CD4-positive, alpha-beta memory T cell (primary cell): ENCODE measurements at regions of chr18 and their contacts with region 1.

Region 1: GRCh38 chr18:3062798-3063680 is 50.1 kb upstream of the LPIN2 start:
- DNase-seq: peak; percentile 63 to 78 (median 66)
- H3K4me3 ChIP-seq: peak overlapping the region in 1 of 2 donors; percentile 53
- H3K4me3 Mint-ChIP-seq: peak overlapping the region; percentile 70 to 86 (median 81)
- H3K27ac ChIP-seq: peak overlapping the region; percentile 93
- H3K27ac Mint-ChIP-seq: peak overlapping the region; percentile 91 to 100 (median 98)
- H3K4me1 ChIP-seq: peaks cover 67% of the 10 kb centered on the region
- H3K4me1 Mint-ChIP-seq: peaks cover 52 to 72% (median 64%) of the 10 kb centered on the region in 4 donors
- H3K27me3 ChIP-seq: no peaks in the 10 kb centered on the region
- H3K27me3 Mint-ChIP-seq: no peaks in the 10 kb centered on the region

Region 2: GRCh38 chr18:2958819-2959298 is 104.2 kb before region 1 on chr18:
- CTCF ChIA-PET with region 1: interaction called, 4 read pairs
- POLR2A ChIA-PET with region 1: interaction called, 89 read pairs
- intact Hi-C with region 1: no loop called
- DNase-seq: peak in 2 of 5 donors; percentile 37 to 64
- H3K4me3 ChIP-seq: peak overlapping the region in 1 of 2 donors; percentile 9
- H3K4me3 Mint-ChIP-seq: peak overlapping the region; percentile 4 to 89 (median 73)
- H3K27ac ChIP-seq: peak overlapping the region; percentile 79
- H3K27ac Mint-ChIP-seq: peak overlapping the region; percentile 88 to 99 (median 98)
- H3K4me1 ChIP-seq: peaks cover 95% of the 10 kb centered on the region
- H3K4me1 Mint-ChIP-seq: peaks cover 68 to 97% (median 85%) of the 10 kb centered on the region in 4 donors
- H3K27me3 ChIP-seq: no peaks in the 10 kb centered on the region
- H3K27me3 Mint-ChIP-seq: no peaks in the 10 kb centered on the region

Region 3: GRCh38 chr18:2985628-2986027 is 77.4 kb before region 1 on chr18:
- CTCF ChIA-PET with region 1: interaction called, 90 read pairs
- POLR2A ChIA-PET with region 1: interaction called, 42 read pairs
- intact Hi-C with region 1: no loop called
- DNase-seq: peak; percentile 47 to 71 (median 69)
- H3K4me3 ChIP-seq: no peak overlapping the region
- H3K4me3 Mint-ChIP-seq: peak overlapping the region in 1 of 8 donors; percentile 44
- H3K27ac ChIP-seq: no peak overlapping the region
- H3K27ac Mint-ChIP-seq: peak overlapping the region in 4 of 7 donors; percentile 15 to 90 (median 39)
- H3K4me1 ChIP-seq: peaks cover 51% of the 10 kb centered on the region
- H3K4me1 Mint-ChIP-seq: peaks cover 34 to 78% (median 50%) of the 10 kb centered on the region in 4 donors
- H3K27me3 ChIP-seq: no peaks in the 10 kb centered on the region
- H3K27me3 Mint-ChIP-seq: no peaks in the 10 kb centered on the region

Region 4: DNA sequence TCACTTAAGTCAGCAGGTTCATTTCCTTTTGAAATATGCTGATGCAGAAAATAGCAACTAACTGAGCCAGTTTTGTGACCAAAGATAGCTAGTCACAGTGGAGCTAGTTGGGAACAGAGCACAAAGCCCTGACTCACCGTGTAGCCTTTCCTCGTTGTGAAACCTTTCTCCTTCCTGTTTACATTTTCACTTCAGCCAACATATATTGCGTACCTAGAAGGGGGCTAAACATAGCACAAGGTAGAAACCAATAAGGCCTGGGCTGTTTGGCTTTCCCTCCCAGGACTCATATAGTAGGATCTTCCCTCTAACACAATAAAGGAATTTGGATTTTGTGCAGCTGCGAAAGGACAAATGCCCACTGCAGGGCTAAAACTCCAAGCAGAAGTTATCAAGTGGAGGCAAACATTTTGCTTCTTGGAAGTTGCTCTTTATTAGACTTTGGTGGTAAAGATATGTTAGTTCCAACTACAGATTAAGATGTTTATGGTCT is 25.6 kb before region 1 on chr18:
- CTCF ChIA-PET with region 1: interaction called, 24 read pairs
- POLR2A ChIA-PET with region 1: interaction called, 22 read pairs
- intact Hi-C with region 1: loop called (anchors 2 kb)
- DNase-seq: no peak
- H3K4me3 ChIP-seq: no peak overlapping the region
- H3K4me3 Mint-ChIP-seq: peak overlapping the region in 2 of 8 donors; percentile 29 to 39
- H3K27ac ChIP-seq: no peak overlapping the region
- H3K27ac Mint-ChIP-seq: peak overlapping the region in 6 of 7 donors; percentile 3 to 81 (median 42)
- H3K4me1 ChIP-seq: peaks cover 8% of the 10 kb centered on the region
- H3K4me1 Mint-ChIP-seq: peaks cover 6 to 20% (median 9%) of the 10 kb centered on the region in 4 donors
- H3K27me3 ChIP-seq: no peaks in the 10 kb centered on the region
- H3K27me3 Mint-ChIP-seq: no peaks in the 10 kb centered on the region

Region 5: GRCh38 chr18:3074087-3074486 is 11.0 kb after region 1 on chr18:
- CTCF ChIA-PET with region 1: interaction called, 49 read pairs
- POLR2A ChIA-PET with region 1: interaction called, 19 read pairs
- intact Hi-C with region 1: no loop called
- DNase-seq: no peak
- H3K4me3 ChIP-seq: no peak overlapping the region
- H3K4me3 Mint-ChIP-seq: no peak overlapping the region
- H3K27ac ChIP-seq: no peak overlapping the region
- H3K27ac Mint-ChIP-seq: peak overlapping the region in 1 of 7 donors; percentile 22
- H3K4me1 ChIP-seq: peaks cover 9% of the 10 kb centered on the region
- H3K4me1 Mint-ChIP-seq: peaks cover 7 to 11% (median 9%) of the 10 kb centered on the region in 4 donors
- H3K27me3 ChIP-seq: no peaks in the 10 kb centered on the region
- H3K27me3 Mint-ChIP-seq: no peaks in the 10 kb centered on the region

Region 6: DNA sequence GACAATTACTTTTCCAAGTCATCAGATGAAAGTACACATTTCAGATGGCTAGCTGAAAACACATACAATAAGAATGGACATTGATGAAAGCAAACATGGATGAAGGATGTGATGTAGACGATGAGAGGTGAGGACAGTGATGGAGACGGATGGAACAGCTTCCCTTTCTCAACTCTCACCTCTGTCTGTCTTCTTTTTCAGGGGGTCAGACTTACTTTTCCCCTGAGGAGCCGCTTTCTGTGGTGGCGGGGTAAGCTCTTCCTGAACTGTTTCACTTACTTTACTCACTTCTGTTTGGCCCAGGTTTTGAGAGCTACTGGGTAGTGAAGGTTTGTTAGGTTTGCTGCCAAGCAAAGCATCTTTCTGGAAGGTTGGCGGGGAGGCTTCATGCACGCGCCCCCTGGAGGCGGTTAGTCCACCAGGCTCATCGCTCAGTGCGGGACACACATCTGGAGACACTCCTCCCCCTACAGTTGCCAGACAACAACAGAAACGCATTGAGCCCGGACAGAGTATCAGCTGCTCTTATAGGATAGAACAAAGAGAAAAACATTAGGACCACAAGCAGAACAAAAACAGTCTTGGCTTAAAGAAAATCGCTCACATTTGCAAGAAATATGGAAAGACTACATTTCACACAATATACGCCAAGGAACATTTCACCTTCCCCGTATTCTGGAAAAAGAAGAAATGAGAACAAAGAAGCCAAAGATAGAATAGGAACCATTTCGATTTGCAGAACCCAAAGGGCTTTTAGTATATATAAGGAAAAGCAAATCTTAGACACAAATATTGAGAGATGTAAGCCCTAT is 66.2 kb after region 1 on chr18:
- CTCF ChIA-PET with region 1: interaction called, 87 read pairs
- POLR2A ChIA-PET with region 1: interaction called, 24 read pairs
- intact Hi-C with region 1: loop called (anchors 1 kb)
- DNase-seq: peak; percentile 71 to 78 (median 76)
- H3K4me3 ChIP-seq: no peak overlapping the region
- H3K4me3 Mint-ChIP-seq: peak overlapping the region in 2 of 8 donors; percentile 35 to 57
- H3K27ac ChIP-seq: no peak overlapping the region
- H3K27ac Mint-ChIP-seq: peak overlapping the region in 5 of 7 donors; percentile 0 to 64 (median 32)
- H3K4me1 ChIP-seq: peaks cover 7% of the 10 kb centered on the region
- H3K4me1 Mint-ChIP-seq: peaks cover 4 to 11% (median 9%) of the 10 kb centered on the region in 4 donors
- H3K27me3 ChIP-seq: no peaks in the 10 kb centered on the region
- H3K27me3 Mint-ChIP-seq: no peaks in the 10 kb centered on the region

Region 7: GRCh38 chr18:3217948-3218647 is 155.1 kb after region 1 on chr18:
- CTCF ChIA-PET with region 1: no interaction called
- POLR2A ChIA-PET with region 1: no interaction called
- intact Hi-C with region 1: no loop called
- DNase-seq: no peak
- H3K4me3 ChIP-seq: no peak overlapping the region
- H3K4me3 Mint-ChIP-seq: no peak overlapping the region
- H3K27ac ChIP-seq: no peak overlapping the region
- H3K27ac Mint-ChIP-seq: no peak overlapping the region
- H3K4me1 ChIP-seq: peaks cover 9% of the 10 kb centered on the region
- H3K4me1 Mint-ChIP-seq: peaks cover 5 to 18% (median 9%) of the 10 kb centered on the region in 4 donors
- H3K27me3 ChIP-seq: no peaks in the 10 kb centered on the region
- H3K27me3 Mint-ChIP-seq: no peaks in the 10 kb centered on the region

Region 8: GRCh38 chr18:3269241-3269913 is 206.3 kb after region 1 on chr18:
- CTCF ChIA-PET with region 1: no interaction called
- POLR2A ChIA-PET with region 1: no interaction called
- intact Hi-C with region 1: no loop called
- DNase-seq: no peak
- H3K4me3 ChIP-seq: no peak overlapping the region
- H3K4me3 Mint-ChIP-seq: peak overlapping the region in 7 of 8 donors; percentile 2 to 77 (median 47)
- H3K27ac ChIP-seq: peak overlapping the region; percentile 3
- H3K27ac Mint-ChIP-seq: peak overlapping the region; percentile 69 to 86 (median 77)
- H3K4me1 ChIP-seq: peaks cover 81% of the 10 kb centered on the region
- H3K4me1 Mint-ChIP-seq: peaks cover 66 to 79% (median 73%) of the 10 kb centered on the region in 4 donors
- H3K27me3 ChIP-seq: no peaks in the 10 kb centered on the region
- H3K27me3 Mint-ChIP-seq: no peaks in the 10 kb centered on the region

Region 9: DNA sequence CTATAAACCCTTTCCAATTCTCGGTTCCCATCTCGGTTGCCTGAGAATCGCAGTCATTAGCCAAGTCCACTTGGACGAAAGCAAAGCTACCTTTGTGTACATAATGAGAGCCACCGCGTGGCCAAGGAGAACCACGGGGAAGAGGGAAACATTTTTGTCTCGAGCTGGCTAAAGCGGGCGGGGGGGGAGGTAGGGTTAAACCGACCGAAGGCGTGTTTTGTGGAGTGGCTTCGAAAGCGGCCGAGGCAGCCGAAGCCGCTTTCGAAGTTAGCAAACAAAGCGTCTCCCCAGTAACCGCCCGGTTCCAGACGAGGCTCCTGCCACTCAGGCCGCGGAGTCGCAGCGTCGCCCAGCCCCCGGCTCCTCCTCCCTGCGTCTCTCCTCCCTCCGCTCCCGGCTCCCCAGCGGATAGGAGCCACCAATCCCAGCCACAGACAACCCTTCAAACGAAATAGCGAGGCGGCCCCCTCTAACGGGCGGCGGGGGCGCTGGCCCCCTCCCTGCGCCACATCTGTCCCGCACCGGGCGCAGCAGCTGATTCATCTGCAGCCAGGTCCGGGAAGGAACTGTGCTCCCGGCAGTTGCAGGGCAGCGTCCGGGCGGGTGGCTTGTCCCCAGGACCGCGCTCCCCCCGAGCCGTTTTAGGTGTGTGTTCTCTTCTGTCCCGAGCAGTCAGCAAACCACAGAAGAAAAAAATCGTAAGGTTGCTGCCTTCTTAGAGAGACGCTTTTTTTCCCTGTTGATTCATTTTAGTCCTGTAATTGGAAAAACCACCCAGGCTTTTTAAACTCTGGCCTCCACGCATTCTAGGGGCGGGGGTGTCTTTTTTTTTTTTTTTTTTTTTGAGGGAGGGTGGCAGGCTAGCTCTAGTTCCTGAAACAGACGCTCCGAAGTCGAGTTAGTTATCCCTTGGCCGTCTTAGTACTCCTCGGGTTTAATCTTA is 385.1 kb after region 1 on chr18:
- CTCF ChIA-PET with region 1: no interaction called
- POLR2A ChIA-PET with region 1: interaction called, 8 read pairs
- intact Hi-C with region 1: loop called (anchors 2 kb)
- DNase-seq: peak; percentile 84 to 91 (median 89)
- H3K4me3 ChIP-seq: peak overlapping the region; percentile 74 to 84
- H3K4me3 Mint-ChIP-seq: peak overlapping the region; percentile 93 to 98 (median 96)
- H3K27ac ChIP-seq: peak overlapping the region; percentile 94
- H3K27ac Mint-ChIP-seq: peak overlapping the region; percentile 99 to 100 (median 100)
- H3K4me1 ChIP-seq: peaks cover 21% of the 10 kb centered on the region
- H3K4me1 Mint-ChIP-seq: peaks cover 9 to 53% (median 22%) of the 10 kb centered on the region in 4 donors
- H3K27me3 ChIP-seq: no peaks in the 10 kb centered on the region
- H3K27me3 Mint-ChIP-seq: peaks cover 0 to 6% of the 10 kb centered on the region in 2 donors